Right ventricle myocardium inferior (tissue), 1 donor: ENCODE measurements at regions of chr17 and their contacts with region 1.

Region 1: GRCh38 chr17:75896415-75897159 is at the start of gene TRIM65:
- DNase-seq: peak; percentile 93
- ATAC-seq: peak; percentile 88
- total RNA-seq, gene TRIM65: 11.3 TPM

Region 2: DNA sequence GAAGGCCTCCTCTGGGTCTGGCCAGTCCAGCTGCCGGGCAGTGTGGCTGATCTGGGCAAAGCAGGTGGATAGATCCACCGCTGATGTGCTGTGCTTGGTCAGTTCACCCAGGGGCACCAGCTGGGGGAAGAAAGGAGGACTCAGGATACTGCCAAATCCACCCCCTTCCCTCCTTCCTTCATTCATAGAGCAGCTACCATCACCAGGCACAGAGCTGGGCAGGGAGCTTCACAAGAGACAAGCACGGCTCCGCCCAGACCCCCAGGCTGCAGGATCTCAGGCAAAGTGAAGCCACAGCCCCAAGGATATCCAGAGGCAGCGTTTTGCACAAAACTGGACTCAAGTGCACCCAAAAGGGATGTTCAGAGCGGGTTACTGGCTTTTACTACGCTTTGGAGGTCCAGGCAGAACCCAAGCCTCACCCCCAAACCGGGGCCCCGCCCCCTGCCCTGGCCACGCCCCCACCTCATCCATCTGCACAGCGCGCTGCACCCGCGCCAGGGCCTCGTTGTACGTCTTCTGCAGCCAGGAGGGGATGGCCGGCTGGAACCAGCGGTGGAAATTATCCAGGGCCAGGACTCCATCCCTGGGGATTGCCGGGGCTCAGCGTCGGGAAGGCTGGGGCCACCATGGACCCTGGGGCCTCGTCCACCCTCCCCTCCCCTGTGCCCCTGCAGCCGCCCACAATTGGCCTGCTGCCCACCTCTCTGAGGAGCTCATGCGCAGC is 61.5 kb before region 1 on chr17:
- intact Hi-C with region 1: no loop called
- DNase-seq: no peak
- ATAC-seq: no peak

Region 3: DNA sequence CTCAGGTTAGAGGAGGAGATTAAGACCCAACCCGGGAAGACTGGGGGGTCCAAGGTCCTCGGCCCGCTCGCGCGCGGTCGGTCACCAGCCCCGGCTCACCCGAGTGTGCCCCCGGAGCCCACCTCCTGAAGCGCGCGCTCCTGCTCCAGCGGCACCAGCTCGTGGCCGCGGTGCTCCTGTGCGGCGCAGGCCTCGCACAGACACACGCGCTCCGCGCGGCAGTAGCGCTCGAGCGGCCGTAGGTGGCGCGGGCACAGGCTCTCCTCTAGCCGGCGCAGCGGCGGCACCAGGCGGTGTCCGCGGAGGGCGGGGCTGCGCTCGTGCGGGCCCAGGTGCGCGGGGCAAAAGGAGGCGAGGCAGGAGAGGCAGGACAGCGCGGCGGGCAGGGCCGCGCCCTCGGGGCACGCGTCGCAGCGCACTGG is 18.8 kb before region 1 on chr17:
- intact Hi-C with region 1: loop called (anchors 1 kb)
- DNase-seq: peak; percentile 88
- ATAC-seq: peak; percentile 68